ENCODE measurements at regions of chr16 and their contacts with region 1.

Region 1: GRCh38 chr16:56600398-56600999 is 7.9 kb upstream of the MT2A start:
- DNase-seq: peak in 33 of 42 donors; percentile 48 to 89 (median 70)

Region 2: GRCh38 chr16:56519459-56520250 is 80.8 kb before region 1 on chr16 and contains the start of gene BBS2:
- intact Hi-C with region 1: loop called (anchors 5 kb)
- DNase-seq: peak; percentile 81 to 97 (median 92)

Region 3: GRCh38 chr16:56700195-56700594 is 99.7 kb after region 1 on chr16:
- intact Hi-C with region 1: loop called (anchors 5 kb)
- DNase-seq: no peak

Region 4: DNA sequence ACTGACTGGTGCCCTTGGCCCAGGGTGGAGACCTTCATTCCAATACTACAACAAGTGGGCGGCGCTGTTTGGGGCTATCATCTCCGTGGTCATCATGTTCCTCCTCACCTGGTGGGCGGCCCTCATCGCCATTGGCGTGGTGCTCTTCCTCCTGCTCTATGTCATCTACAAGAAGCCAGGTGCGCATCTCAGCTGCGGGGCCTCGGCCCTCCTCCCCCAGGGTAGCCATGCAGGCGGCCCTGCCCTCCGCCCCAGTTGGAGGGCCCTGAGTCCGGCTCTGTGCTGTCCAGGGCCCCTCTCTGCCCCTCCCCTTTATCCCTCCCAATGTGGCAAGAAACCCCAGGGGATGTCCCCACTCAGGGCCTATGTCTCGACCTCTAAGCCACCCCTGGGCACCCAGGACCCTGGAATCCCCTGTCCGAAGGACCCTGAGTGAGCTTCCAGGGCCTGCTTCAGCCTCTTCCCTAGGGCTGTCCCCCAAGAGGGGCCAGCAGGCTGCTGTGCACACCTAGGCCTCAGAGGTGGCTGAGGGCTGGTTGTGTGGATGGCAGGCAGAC is 283.6 kb after region 1 on chr16:
- intact Hi-C with region 1: no loop called
- DNase-seq: no peak

Region 5: GRCh38 chr16:57235128-57236021 is 634.9 kb after region 1 on chr16:
- intact Hi-C with region 1: no loop called
- DNase-seq: no peak

Measured in head of caudate nucleus (tissue), 42 donors.